ENCODE measurements at regions of chr13 and their contacts with region 1.

Region 1: DNA sequence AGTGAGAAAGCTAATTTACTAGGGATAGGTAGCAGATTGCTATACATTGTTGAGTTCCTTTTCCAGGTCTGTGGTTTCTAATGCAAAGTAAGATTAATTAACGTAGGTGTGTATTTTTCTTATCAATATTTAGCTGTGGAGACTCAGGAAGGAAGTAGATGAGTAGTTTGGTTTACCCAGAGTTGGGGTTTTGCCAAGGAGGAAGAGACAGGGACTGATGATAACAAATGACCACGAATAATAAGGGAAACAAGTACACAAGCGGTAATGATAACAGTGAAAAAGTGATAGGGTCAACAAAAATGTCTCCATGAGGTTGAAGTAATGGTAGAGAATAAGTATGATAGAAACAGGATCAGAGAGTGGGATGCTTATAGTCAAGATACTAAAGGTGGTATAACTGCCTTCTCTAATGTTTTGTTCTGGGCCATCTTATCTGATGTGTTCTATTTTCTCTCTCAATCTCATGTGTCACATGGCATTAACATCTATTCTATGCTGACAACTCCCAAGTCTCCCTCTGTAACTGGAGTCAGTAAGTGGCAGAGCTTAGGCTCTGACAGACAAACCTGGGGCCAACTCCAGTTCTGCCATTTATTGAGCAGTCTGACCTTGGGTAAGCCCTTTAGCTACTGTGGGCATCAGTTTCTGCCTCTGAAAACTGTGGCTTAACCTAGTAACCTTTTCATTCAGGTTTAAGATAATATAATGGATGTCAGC is 8.8 kb downstream of the OBI1 start:
- DNase-seq: no peak
- ATAC-seq: no peak
- H3K4me3 ChIP-seq: no peak overlapping the region
- H3K27ac ChIP-seq: no peak overlapping the region
- H3K4me1 ChIP-seq: peaks cover 61% of the 10 kb centered on the region
- H3K27me3 ChIP-seq: no peaks in the 10 kb centered on the region
- CTCF ChIP-seq: no peak
- EP300 ChIP-seq: no peak
- POLR2A ChIP-seq: no peak
- RAD21 ChIP-seq: no peak

Region 2: GRCh38 chr13:78609464-78610205 is 40.5 kb before region 1 on chr13:
- CTCF ChIA-PET with region 1: no interaction called
- POLR2A ChIA-PET with region 1: no interaction called
- in situ Hi-C with region 1: no loop called
- intact Hi-C with region 1: loop called (anchors 2 kb)
- DNase-seq: no peak
- ATAC-seq: peak; percentile 65
- H3K4me3 ChIP-seq: peak overlapping the region; percentile 58 to 73 (median 69)
- H3K27ac ChIP-seq: no peak overlapping the region
- H3K4me1 ChIP-seq: peaks cover 25% of the 10 kb centered on the region
- H3K27me3 ChIP-seq: peaks cover 3 to 55% of the 10 kb centered on the region in 2 experiments
- CTCF ChIP-seq: no peak
- EP300 ChIP-seq: no peak
- POLR2A ChIP-seq: no peak
- RAD21 ChIP-seq: no peak